ENCODE measurements at regions of chr7 and their contacts with region 1.

Region 1: DNA sequence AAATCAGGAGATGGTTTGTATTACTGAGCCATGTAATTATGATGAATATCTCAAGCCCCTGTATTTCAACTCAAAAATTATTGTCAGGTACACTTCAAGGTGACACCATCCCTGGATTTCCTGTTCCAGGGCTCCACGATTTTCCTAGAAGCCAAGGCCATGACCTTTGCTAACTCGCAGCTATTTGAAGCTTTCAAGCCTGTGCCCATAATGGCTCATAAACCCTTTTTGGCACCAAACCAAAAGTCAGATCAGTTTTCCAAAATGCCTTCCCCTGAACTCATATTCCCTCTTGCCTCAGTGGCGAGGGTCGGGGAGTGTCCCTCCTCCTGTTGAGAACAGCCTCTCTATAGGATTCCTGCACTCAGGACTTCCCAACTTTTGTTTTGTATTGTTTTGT is 70.8 kb downstream of the HIP1 start:
- DNase-seq: no peak
- ATAC-seq: no peak
- H3K4me3 ChIP-seq: no peak overlapping the region
- H3K27ac ChIP-seq: no peak overlapping the region
- H3K4me1 ChIP-seq: no peaks in the 10 kb centered on the region
- H3K27me3 ChIP-seq: no peaks in the 10 kb centered on the region
- CTCF ChIP-seq: no peak
- POLR2A ChIP-seq: no peak
- RAD21 ChIP-seq: no peak

Region 2: GRCh38 chr7:75546237-75547015 is 121.5 kb before region 1 on chr7:
- CTCF ChIA-PET with region 1: no interaction called
- POLR2A ChIA-PET with region 1: no interaction called
- dilution Hi-C with region 1: no loop called
- in situ Hi-C with region 1: no loop called
- intact Hi-C with region 1: no loop called
- DNase-seq: no peak
- ATAC-seq: no peak
- H3K4me3 ChIP-seq: no peak overlapping the region
- H3K27ac ChIP-seq: no peak overlapping the region
- H3K4me1 ChIP-seq: no peaks in the 10 kb centered on the region
- H3K27me3 ChIP-seq: no peaks in the 10 kb centered on the region
- CTCF ChIP-seq: no peak
- POLR2A ChIP-seq: no peak
- RAD21 ChIP-seq: no peak

Region 3: GRCh38 chr7:75711656-75712514 is 43.9 kb after region 1 on chr7:
- CTCF ChIA-PET with region 1: no interaction called
- POLR2A ChIA-PET with region 1: no interaction called
- dilution Hi-C with region 1: no loop called
- in situ Hi-C with region 1: no loop called
- intact Hi-C with region 1: loop called (anchors 5 kb)
- DNase-seq: peak; percentile 49
- ATAC-seq: peak; percentile 80
- H3K4me3 ChIP-seq: no peak overlapping the region
- H3K27ac ChIP-seq: peak overlapping the region; percentile 50
- H3K4me1 ChIP-seq: peaks cover 12% of the 10 kb centered on the region
- H3K27me3 ChIP-seq: no peaks in the 10 kb centered on the region
- CTCF ChIP-seq: no peak
- POLR2A ChIP-seq: no peak
- RAD21 ChIP-seq: no peak

Region 4: GRCh38 chr7:76122516-76123239 is 454.7 kb after region 1 on chr7:
- CTCF ChIA-PET with region 1: no interaction called
- POLR2A ChIA-PET with region 1: no interaction called
- dilution Hi-C with region 1: no loop called
- in situ Hi-C with region 1: no loop called
- intact Hi-C with region 1: no loop called
- DNase-seq: no peak
- ATAC-seq: no peak
- H3K4me3 ChIP-seq: no peak overlapping the region
- H3K27ac ChIP-seq: no peak overlapping the region
- H3K4me1 ChIP-seq: no peaks in the 10 kb centered on the region
- H3K27me3 ChIP-seq: no peaks in the 10 kb centered on the region
- CTCF ChIP-seq: no peak
- POLR2A ChIP-seq: no peak
- RAD21 ChIP-seq: no peak

Measured in IMR-90 (cell line).